ENCODE measurements at regions of chrX and their contacts with region 1.

Region 1: DNA sequence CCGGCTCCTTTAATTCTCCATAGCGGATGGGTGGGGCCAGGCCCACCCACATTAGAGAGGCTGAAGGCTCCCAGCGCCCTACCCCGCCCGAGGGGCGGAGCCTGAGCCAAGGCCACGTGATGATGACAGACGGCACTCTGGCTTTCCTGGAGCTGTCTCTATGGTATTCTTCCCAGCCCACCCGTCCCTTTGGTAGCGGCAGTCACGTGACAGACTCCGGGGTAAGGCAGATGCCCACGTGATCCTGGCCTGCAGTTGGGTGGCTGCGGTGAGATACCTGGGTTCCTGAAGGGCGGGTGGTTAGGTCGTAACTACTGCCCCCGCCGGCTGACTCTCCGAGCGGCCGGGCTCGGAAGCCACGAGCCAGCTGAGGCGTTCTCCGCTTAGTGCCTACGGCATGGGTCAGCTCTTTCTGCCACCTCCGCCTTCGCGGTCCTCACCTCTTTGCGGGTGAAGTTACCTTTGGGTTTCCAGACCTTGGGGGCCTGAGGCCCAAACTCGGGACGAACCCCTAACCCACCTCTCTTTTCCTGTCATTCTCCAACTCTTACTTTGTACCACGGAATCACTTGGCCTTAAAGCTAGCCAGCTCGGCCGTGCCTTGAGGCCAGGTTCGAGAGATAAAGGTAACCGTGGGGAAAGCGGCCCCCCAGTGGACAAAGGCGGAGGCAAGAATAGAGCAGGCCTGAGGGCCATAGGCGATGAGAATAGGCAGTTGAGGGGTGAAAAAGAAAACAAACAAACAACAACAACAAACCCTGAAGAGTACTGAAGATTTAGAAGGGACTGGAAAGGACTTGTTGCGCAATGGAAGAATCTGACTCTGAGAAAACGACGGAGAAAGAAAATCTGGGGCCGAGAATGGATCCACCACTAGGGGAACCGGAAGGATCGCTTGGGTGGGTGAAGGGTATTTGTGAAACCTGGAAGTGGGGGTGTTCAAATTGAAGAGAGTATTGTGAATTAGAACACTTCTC is at the start of gene RRAGB:
- DNase-seq: peak; percentile 96 to 97
- H3K4me3 ChIP-seq: peak within 1 kb of the TSS; percentile 67 to 72
- H3K27ac ChIP-seq: peak within 1 kb of the TSS; percentile 85 to 86
- H3K4me1 ChIP-seq: peaks cover 0 to 14% (median 1%) of the 10 kb centered on the region in 4 donors
- H3K27me3 ChIP-seq: no peaks in the 10 kb centered on the region
- CTCF ChIP-seq: peak; percentile 32 to 45

Region 2: DNA sequence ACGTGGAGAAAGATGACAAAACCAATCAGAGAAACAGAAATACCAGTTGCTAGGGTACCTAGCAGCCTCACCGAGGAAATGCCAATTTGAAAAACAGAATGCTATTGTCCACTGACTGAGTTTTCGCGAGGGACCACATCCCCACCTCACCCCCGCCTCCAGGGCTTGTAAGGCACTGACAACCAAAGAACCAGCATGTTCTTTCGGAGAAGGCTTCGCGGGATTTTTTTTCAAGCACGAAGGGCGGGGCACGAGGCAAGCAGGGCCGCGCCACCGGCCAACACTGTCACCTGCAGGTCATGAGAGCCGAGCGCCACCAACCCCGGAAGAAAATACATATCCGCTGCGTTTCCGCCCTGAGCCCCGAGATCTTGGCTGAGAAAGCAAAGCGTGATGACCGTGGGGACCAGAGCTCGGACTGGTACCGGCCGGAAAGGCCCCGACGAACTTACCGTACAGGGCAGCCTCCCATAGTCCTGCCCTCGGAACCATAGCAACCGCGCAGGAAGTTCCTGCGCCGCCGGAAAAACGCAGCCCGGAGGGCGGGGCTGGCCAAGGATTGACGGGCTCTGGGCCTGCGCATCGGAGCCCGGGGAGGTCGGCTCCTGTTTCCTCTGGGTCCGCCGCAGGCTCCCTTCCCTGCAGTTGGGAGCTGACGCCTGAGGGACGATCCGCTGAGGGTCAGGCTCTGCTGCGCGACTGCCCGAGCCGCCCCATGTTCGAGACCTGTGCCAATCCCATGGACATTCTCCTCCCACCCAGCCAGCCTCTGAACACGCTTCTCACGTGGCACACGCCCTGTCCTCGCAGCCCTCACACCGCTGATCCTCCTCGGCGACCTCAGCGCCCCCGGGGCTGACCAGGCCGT is 556.9 kb before region 1 on chrX:
- intact Hi-C with region 1: loop called (anchors 10 kb)
- DNase-seq: peak; percentile 88 to 94
- H3K4me3 ChIP-seq: peak overlapping the region; percentile 62 to 72
- H3K27ac ChIP-seq: peak overlapping the region; percentile 87 to 91
- H3K4me1 ChIP-seq: no peaks in the 10 kb centered on the region
- H3K27me3 ChIP-seq: no peaks in the 10 kb centered on the region
- CTCF ChIP-seq: peak; percentile 20

Measured in tibial artery (tissue), 4 donors.